ENCODE measurements at regions of chr3 and their contacts with region 1.

Region 1: GRCh38 chr3:76024640-76025039 is 239.3 kb upstream of the ZNF717 start:
- DNase-seq: no peak
- H3K4me3 Mint-ChIP-seq: no peak overlapping the region
- H3K27ac Mint-ChIP-seq: no peak overlapping the region
- H3K4me1 Mint-ChIP-seq: no peaks in the 10 kb centered on the region
- H3K27me3 Mint-ChIP-seq: no peaks in the 10 kb centered on the region
- CTCF ChIP-seq: no peak

Region 2: DNA sequence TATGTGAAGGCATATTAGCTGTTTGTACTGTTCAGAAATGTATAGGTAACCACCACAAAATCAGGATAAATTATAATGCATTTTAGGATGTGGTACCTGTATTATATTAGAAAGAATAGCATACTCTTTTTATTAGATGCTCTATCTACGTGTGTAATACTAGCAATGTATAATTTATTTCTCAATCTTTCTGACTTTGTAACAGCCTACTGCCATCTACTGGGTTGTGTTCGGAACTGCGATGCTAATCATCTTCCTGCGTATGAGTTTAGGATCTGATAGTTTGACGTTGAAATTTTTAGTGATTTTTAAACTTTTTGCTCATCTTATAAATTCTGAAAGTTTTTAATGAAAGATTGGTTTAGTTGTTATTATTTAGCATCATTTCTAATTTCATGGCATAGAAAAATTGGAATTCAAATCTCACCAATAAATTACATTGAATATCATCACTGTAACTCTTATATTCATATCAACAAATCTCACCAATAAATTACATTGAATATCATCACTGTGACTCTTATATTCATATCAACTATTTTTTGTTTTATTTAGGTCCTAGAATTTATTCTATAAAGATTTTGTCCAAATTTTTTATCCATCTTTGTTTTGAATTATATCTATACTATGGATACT is 83.4 kb after region 1 on chr3:
- CTCF ChIA-PET with region 1: no interaction called
- intact Hi-C with region 1: loop called (anchors 5 kb)
- DNase-seq: no peak
- H3K4me3 Mint-ChIP-seq: no peak overlapping the region
- H3K27ac Mint-ChIP-seq: no peak overlapping the region
- H3K4me1 Mint-ChIP-seq: no peaks in the 10 kb centered on the region
- H3K27me3 Mint-ChIP-seq: no peaks in the 10 kb centered on the region
- CTCF ChIP-seq: no peak

Region 3: DNA sequence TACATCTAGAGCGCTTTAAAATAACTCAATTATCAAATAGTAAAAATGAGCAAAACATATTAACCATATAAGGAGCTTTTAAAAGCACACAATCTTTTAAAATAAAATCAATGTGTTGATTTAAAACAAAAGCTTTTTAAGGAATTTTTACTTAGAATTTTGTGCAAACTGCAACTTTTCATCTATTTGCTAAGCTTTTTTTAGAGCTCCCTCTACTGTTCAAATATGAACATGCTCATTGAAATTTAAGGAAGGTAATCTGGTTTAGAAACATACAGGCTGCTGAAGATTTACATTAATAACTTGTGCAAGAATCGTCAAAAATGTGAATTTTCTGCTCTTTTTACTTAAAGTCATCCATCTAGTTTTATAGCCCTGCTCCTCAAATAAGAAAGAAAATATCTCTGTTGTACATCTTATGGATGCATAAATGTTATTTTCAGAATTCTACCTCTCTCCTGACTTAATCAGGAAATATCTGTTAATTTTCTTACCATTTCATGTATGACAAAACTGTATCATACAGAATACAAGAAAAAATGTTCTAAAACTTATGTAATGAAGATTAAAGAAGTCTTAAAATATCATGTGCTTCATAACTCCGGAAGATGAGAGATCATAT is 545.9 kb after region 1 on chr3:
- CTCF ChIA-PET with region 1: no interaction called
- intact Hi-C with region 1: loop called (anchors 5 kb)
- DNase-seq: no peak
- H3K4me3 Mint-ChIP-seq: no peak overlapping the region
- H3K27ac Mint-ChIP-seq: no peak overlapping the region
- H3K4me1 Mint-ChIP-seq: no peaks in the 10 kb centered on the region
- H3K27me3 Mint-ChIP-seq: no peaks in the 10 kb centered on the region
- CTCF ChIP-seq: no peak

Region 4: GRCh38 chr3:77254967-77255831 is 1230.6 kb after region 1 on chr3:
- CTCF ChIA-PET with region 1: no interaction called
- intact Hi-C with region 1: loop called (anchors 10 kb)
- DNase-seq: peak; percentile 66
- H3K4me3 Mint-ChIP-seq: no peak overlapping the region
- H3K27ac Mint-ChIP-seq: no peak overlapping the region
- H3K4me1 Mint-ChIP-seq: no peaks in the 10 kb centered on the region
- H3K27me3 Mint-ChIP-seq: no peaks in the 10 kb centered on the region
- CTCF ChIP-seq: peak; percentile 52